Transverse colon (tissue), 4 donors: ENCODE measurements at regions of chr18 and their contacts with region 1.

Region 1: DNA sequence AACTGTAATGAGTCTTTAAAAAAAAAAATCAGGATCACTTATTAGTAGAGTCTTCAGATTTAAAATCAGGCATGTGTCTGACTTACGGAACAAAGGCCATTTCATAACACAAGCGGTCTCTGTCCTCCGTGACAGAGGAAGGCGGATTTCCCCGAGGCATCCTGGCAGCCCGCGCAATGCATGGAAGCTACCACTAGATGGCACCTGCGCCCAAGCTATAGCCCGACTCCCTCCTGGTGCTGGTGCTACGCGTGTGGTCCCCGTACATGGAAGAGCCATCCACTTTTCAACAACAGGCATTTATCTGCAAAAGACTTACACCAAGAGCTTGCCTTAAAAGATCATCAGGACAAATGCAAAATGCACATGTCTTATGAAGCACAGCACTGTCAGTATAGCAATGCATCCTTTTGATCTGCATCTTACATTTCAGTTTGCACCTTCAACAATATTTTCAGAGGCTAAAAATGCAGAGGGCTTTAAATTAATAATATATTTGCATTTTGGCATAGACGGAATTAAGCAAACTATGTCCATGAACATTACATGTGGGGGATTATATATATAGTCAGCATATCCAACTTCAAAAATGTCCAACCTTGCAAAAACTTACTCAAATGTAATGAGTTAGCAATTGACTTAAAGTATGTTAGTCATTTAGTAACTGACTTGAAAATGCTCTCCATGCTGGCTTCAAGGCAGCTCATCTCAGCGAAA is 96.0 kb downstream of the ZNF516 start:
- DNase-seq: peak; percentile 81
- H3K4me3 ChIP-seq: no peak overlapping the region
- H3K27ac ChIP-seq: no peak overlapping the region
- H3K4me1 ChIP-seq: peaks cover 0 to 10% (median 2%) of the 10 kb centered on the region in 4 donors
- H3K27me3 ChIP-seq: no peaks in the 10 kb centered on the region
- CTCF ChIP-seq: peak; percentile 89 to 97 (median 94)
- EP300 ChIP-seq: no peak
- POLR2A ChIP-seq: no peak

Region 2: GRCh38 chr18:76620321-76621170 is 221.5 kb after region 1 on chr18:
- in situ Hi-C with region 1: no loop called
- intact Hi-C with region 1: loop called (anchors 5 kb)
- DNase-seq: peak; percentile 54
- H3K4me3 ChIP-seq: peak overlapping the region in 3 of 4 donors; percentile 14 to 39 (median 26)
- H3K27ac ChIP-seq: peak overlapping the region; percentile 18 to 70 (median 64)
- H3K4me1 ChIP-seq: peaks cover 6 to 24% (median 16%) of the 10 kb centered on the region in 4 donors
- H3K27me3 ChIP-seq: no peaks in the 10 kb centered on the region
- CTCF ChIP-seq: peak; percentile 29 to 56 (median 49)
- EP300 ChIP-seq: no peak
- POLR2A ChIP-seq: no peak

Region 3: DNA sequence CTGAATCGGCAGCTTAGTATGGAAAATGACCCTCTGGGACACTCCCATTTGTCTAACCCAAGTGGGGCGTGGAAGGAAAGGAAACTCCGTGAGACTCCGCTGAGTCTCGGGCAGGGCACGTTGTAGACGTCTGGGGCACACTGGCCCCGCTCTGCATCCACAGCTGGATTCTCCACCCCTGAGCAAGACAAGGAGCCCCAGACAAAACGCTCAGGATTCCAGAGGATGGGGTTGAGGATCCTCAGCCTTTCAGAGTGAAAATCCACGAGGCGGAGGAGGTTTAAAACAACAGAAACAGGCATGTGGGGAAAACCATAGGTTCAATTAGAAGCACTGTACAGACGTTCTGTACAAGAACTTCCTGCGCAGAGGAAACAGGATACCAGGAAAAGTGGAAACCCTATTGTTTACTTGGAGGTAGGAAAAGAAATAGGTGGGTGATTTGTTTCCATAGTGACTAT is 298.4 kb after region 1 on chr18:
- in situ Hi-C with region 1: loop called in 3 of 4 experiments (anchors 10 kb)
- intact Hi-C with region 1: no loop called
- DNase-seq: peak; percentile 26
- H3K4me3 ChIP-seq: peak overlapping the region in 2 of 4 donors; percentile 8 to 16
- H3K27ac ChIP-seq: no peak overlapping the region
- H3K4me1 ChIP-seq: peaks cover 4 to 9% (median 7%) of the 10 kb centered on the region in 4 donors
- H3K27me3 ChIP-seq: peaks cover 16% of the 10 kb centered on the region
- CTCF ChIP-seq: no peak
- EP300 ChIP-seq: no peak
- POLR2A ChIP-seq: no peak

Region 4: GRCh38 chr18:76709659-76710645 is 310.9 kb after region 1 on chr18:
- in situ Hi-C with region 1: loop called in 2 of 4 experiments (anchors 10 kb)
- intact Hi-C with region 1: loop called (anchors 5 kb)
- DNase-seq: peak; percentile 61
- H3K4me3 ChIP-seq: no peak overlapping the region
- H3K27ac ChIP-seq: no peak overlapping the region
- H3K4me1 ChIP-seq: peaks cover 0 to 6% (median 0%) of the 10 kb centered on the region in 4 donors
- H3K27me3 ChIP-seq: no peaks in the 10 kb centered on the region
- CTCF ChIP-seq: peak; percentile 87 to 96 (median 89)
- EP300 ChIP-seq: no peak
- POLR2A ChIP-seq: no peak